ENCODE measurements at regions of chr1 and their contacts with region 1.

Region 1: GRCh38 chr1:18875107-18875795 is 15.8 kb upstream of the TAS1R2 start:
- DNase-seq: peak; percentile 84 to 96 (median 93)
- H3K4me3 ChIP-seq: no peak overlapping the region
- H3K27ac ChIP-seq: no peak overlapping the region
- H3K4me1 ChIP-seq: no peaks in the 10 kb centered on the region
- H3K27me3 ChIP-seq: no peaks in the 10 kb centered on the region
- CTCF ChIP-seq: peak; percentile 74 to 91 (median 82)
- POLR2A ChIP-seq: no peak

Region 2: DNA sequence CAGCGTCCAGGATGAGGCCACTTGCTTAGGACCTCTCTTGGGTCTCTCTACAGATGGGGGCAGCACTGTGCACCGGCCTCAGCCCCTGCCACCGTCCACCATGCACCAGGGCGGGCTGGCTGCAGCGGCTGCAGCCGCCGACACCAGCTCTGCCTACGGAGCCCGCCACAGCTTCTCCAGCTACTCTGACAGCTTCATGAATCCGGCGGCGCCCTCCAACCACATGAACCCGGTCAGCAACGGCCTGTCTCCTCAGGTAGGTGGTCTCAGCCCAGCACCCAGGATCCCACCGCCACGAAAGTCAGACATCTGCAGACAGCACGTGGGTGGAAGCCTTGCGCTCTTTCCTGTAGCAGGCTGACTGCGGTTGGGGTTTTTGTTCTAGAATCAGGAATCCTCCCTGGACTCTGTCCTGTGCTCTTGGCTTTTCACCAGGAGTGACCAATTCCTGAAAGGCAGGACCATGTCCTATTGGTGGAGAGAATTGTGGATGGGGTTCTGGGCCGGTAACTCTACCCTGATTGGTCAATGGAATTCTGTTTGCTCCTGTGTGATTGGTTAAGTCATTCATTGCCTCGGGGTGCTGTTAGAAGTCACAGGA is 172.1 kb before region 1 on chr1:
- intact Hi-C with region 1: loop called in 1 of 2 experiments (anchors 10 kb)
- DNase-seq: no peak
- H3K4me3 ChIP-seq: no peak overlapping the region
- H3K27ac ChIP-seq: no peak overlapping the region
- H3K4me1 ChIP-seq: no peaks in the 10 kb centered on the region
- H3K27me3 ChIP-seq: peaks cover 16% of the 10 kb centered on the region
- CTCF ChIP-seq: no peak
- POLR2A ChIP-seq: no peak

Region 3: DNA sequence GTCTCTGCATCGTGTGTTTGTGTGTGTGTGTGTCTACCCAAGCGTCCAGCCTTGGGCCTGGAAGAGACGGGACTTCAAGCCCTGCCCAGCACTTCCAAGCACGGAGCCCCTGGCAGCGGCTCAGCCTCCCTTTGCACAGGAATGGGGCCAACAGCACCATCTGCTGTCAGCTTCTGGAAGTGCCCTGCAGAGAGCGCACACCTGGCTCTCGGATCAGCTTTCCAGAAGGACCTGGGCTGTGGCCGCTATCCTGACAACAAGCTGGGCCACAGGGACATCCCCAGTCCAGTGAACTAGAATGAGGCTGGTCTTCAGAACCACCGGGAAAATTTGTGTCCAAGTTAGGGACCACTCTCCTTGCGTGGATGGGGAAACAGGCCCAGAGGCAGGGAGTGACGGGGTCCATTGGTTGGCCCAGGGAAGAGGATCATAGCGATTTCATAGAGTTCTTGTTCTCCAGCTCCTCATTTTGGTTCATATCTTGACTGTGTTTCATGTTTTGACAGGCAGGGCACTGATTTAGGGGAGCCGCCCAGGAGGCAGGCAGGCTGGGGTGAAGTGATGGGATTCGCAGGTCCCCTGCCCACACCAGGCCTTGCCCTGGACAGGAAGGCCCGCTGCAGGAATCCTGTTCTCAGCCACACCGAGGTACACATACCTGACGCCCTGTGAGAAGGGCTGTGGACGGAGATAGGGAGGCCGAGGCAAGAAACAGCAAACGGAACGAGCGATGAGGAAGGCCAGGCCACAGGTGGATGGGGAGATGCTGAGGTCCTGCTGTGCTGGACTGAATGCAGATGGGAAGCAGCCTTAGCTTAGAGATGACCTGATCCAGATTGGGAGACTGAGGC is 54.2 kb before region 1 on chr1:
- intact Hi-C with region 1: loop called in 1 of 2 experiments (anchors 5 kb)
- DNase-seq: peak; percentile 66 to 88 (median 80)
- H3K4me3 ChIP-seq: no peak overlapping the region
- H3K27ac ChIP-seq: no peak overlapping the region
- H3K4me1 ChIP-seq: no peaks in the 10 kb centered on the region
- H3K27me3 ChIP-seq: peaks cover 12% of the 10 kb centered on the region
- CTCF ChIP-seq: peak; percentile 79 to 91 (median 84)
- POLR2A ChIP-seq: no peak

Region 4: DNA sequence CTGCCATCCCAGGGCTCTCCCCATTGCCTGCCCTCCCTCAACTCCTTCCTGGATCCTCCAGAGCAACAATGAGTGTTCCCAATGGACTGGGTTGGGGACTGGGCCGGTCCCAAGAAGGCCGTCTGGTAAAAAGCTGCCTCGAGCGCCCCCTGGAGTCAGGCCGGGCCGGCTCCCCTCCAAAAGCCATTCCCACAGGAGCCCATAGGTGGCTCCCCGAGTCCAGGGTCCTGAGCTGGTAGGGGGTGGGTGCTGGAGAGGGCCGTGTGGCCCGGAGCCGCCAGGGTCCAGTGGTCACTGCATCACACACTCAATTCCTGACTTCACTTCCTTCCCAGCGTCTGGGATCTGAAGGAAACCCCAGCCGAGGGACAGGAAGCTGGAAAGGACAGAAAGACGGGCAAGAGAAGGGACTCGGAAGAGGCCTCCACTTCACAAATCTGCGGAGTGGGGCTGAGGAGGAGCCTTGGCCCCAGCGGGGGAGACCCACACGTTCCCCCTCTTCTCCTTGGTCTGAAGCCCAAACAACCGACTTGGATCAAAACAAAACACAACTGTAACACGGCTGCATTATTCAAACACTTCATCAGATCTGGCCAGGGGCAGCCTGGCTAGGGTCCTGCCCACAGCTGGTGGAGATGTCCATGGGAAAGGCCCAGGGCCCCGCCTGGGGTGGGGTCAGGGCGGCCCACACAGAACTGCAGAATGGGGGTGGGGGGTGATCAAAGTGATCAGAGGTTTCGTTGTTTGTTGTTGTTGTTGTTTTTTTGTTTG is 38.0 kb after region 1 on chr1:
- intact Hi-C with region 1: no loop called
- DNase-seq: peak; percentile 82 to 96 (median 90)
- H3K4me3 ChIP-seq: no peak overlapping the region
- H3K27ac ChIP-seq: peak overlapping the region in 3 of 5 donors; percentile 20 to 69 (median 36)
- H3K4me1 ChIP-seq: peaks cover 0 to 10% of the 10 kb centered on the region in 2 donors
- H3K27me3 ChIP-seq: no peaks in the 10 kb centered on the region
- CTCF ChIP-seq: peak; percentile 94 to 99 (median 98)
- POLR2A ChIP-seq: no peak